ENCODE measurements at regions of chr1 and their contacts with region 1.

Region 1: DNA sequence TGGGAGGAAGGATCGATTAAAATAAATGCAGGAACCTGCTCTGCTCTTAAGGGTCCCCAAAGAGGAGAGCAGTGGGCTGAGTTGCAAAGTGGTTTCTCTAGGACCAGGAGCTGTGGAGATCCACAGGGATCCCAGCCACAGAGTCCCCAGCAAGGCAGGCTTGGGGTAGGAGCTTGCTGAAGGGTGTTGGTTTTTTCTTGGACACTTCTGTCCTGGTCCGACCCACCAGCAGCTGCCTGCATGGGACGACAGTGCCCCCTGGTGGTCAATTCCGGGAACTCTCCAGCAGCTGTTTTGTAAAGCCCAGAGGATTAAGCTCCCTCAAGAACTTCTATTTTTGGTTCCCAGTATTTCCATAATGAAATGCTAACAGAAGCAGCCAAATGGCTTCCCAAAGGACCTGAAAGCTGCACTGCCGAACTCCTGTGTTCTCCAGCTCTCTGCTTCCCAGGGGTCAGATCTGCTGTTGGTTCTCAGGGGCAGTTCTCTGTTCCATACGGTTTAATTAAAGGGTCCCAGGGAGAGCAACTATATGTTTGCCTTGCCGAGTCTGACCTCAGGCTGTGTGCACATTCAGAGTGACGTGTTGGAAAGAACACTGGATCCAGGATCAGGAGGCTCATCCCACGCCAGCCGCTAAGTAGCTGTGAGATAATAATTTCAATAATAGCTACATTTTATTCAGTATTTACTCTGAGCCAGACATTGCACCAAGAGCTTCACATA is 23.2 kb downstream of the NENF start:
- DNase-seq: no peak
- ATAC-seq: peak; percentile 91
- H3K4me3 ChIP-seq: no peak overlapping the region
- H3K27ac ChIP-seq: no peak overlapping the region
- H3K4me1 ChIP-seq: no peaks in the 10 kb centered on the region
- H3K27me3 ChIP-seq: no peaks in the 10 kb centered on the region; a peak in 1 of 4 replicates
- CTCF ChIP-seq: peak; percentile 95 to 99 (median 96)
- EP300 ChIP-seq: no peak
- POLR2A ChIP-seq: no peak
- RAD21 ChIP-seq: peak; percentile 100

Region 2: GRCh38 chr1:211675230-211676105 is 780.5 kb before region 1 on chr1 and contains the start of gene NEK2:
- CTCF ChIA-PET with region 1: interaction called, 128 read pairs
- POLR2A ChIA-PET with region 1: no interaction called
- RAD21 ChIA-PET with region 1: interaction called, 105 read pairs
- SMC1A ChIA-PET with region 1: interaction called, 85 read pairs
- in situ Hi-C with region 1: loop called (anchors 5 kb)
- intact Hi-C with region 1: no loop called
- DNase-seq: peak; percentile 80
- ATAC-seq: peak; percentile 97
- H3K4me3 ChIP-seq: peak within 1 kb of the TSS; percentile 81
- H3K27ac ChIP-seq: peak within 1 kb of the TSS; percentile 68
- H3K4me1 ChIP-seq: peaks cover 11% of the 10 kb centered on the region
- H3K27me3 ChIP-seq: no peaks in the 10 kb centered on the region
- CTCF ChIP-seq: no peak
- EP300 ChIP-seq: no peak
- POLR2A ChIP-seq: peak; percentile 82
- RAD21 ChIP-seq: no peak
- polyA plus RNA-seq, gene NEK2: 16.7 to 21.3 TPM

Region 3: GRCh38 chr1:212062832-212063438 is 393.0 kb before region 1 on chr1:
- CTCF ChIA-PET with region 1: interaction called, 136 read pairs
- POLR2A ChIA-PET with region 1: no interaction called
- RAD21 ChIA-PET with region 1: interaction called, 41 read pairs
- SMC1A ChIA-PET with region 1: interaction called, 45 read pairs
- in situ Hi-C with region 1: loop called (anchors 5 kb)
- intact Hi-C with region 1: no loop called
- DNase-seq: no peak
- ATAC-seq: peak; percentile 83
- H3K4me3 ChIP-seq: no peak overlapping the region
- H3K27ac ChIP-seq: no peak overlapping the region
- H3K4me1 ChIP-seq: no peaks in the 10 kb centered on the region
- H3K27me3 ChIP-seq: no peaks in the 10 kb centered on the region
- CTCF ChIP-seq: peak; percentile 54 to 63 (median 56); a peak in 5 of 6 replicates
- EP300 ChIP-seq: no peak
- POLR2A ChIP-seq: no peak
- RAD21 ChIP-seq: peak; percentile 59

Region 4: GRCh38 chr1:212218911-212219310 is 237.1 kb before region 1 on chr1:
- CTCF ChIA-PET with region 1: no interaction called
- POLR2A ChIA-PET with region 1: no interaction called
- RAD21 ChIA-PET with region 1: no interaction called
- SMC1A ChIA-PET with region 1: no interaction called
- in situ Hi-C with region 1: no loop called
- intact Hi-C with region 1: no loop called
- DNase-seq: peak; percentile 48
- ATAC-seq: peak; percentile 97
- H3K4me3 ChIP-seq: no peak overlapping the region
- H3K27ac ChIP-seq: no peak overlapping the region
- H3K4me1 ChIP-seq: peaks cover 8% of the 10 kb centered on the region
- H3K27me3 ChIP-seq: no peaks in the 10 kb centered on the region
- CTCF ChIP-seq: no peak
- EP300 ChIP-seq: no peak
- POLR2A ChIP-seq: no peak
- RAD21 ChIP-seq: no peak

Region 5: GRCh38 chr1:212315907-212316306 is 140.1 kb before region 1 on chr1:
- CTCF ChIA-PET with region 1: interaction called, 12 read pairs
- POLR2A ChIA-PET with region 1: no interaction called
- RAD21 ChIA-PET with region 1: interaction called, 10 read pairs
- SMC1A ChIA-PET with region 1: interaction called, 13 read pairs
- in situ Hi-C with region 1: no loop called
- intact Hi-C with region 1: loop called (anchors 5 kb)
- DNase-seq: no peak
- ATAC-seq: peak; percentile 89
- H3K4me3 ChIP-seq: no peak overlapping the region
- H3K27ac ChIP-seq: no peak overlapping the region
- H3K4me1 ChIP-seq: no peaks in the 10 kb centered on the region
- H3K27me3 ChIP-seq: no peaks in the 10 kb centered on the region
- CTCF ChIP-seq: peak; percentile 26 to 39 (median 27); a peak in 4 of 6 replicates
- EP300 ChIP-seq: no peak
- POLR2A ChIP-seq: no peak
- RAD21 ChIP-seq: peak; percentile 51

Region 6: DNA sequence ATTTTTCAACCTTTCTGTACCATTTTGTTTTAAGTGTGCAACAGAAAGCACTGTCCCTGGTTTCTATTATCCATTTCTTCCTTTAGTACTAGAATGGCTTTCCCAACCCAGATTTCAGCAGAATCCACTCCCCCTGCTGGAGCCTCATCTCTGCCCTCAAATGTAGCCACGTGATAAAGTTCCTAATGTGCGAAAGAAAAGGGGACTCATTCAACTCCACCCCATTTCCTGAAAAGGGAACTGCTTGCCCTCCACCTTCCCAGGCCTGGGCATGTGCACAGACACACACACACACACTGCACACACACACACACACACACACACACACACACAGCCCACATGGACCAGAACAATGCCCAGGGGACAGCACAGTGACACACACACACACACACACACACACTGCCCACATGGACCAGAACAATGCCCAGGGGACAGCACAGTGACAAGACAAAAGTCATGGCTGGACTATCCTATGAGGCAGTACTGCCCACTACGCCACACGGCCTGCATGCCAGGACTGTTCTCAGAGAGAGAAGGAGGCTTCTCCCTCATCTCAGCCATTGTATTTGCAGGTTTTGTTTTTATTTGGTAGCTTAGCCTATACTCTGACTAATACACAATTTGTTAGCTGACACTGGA is 74.5 kb before region 1 on chr1:
- CTCF ChIA-PET with region 1: interaction called, 60 read pairs
- POLR2A ChIA-PET with region 1: no interaction called
- RAD21 ChIA-PET with region 1: interaction called, 18 read pairs
- SMC1A ChIA-PET with region 1: interaction called, 11 read pairs
- in situ Hi-C with region 1: no loop called
- intact Hi-C with region 1: no loop called
- DNase-seq: no peak
- ATAC-seq: no peak
- H3K4me3 ChIP-seq: no peak overlapping the region
- H3K27ac ChIP-seq: no peak overlapping the region
- H3K4me1 ChIP-seq: no peaks in the 10 kb centered on the region
- H3K27me3 ChIP-seq: no peaks in the 10 kb centered on the region
- CTCF ChIP-seq: no peak
- EP300 ChIP-seq: no peak
- POLR2A ChIP-seq: no peak
- RAD21 ChIP-seq: no peak

Region 7: GRCh38 chr1:212477014-212477679 is 21.2 kb after region 1 on chr1:
- CTCF ChIA-PET with region 1: interaction called, 68 read pairs
- POLR2A ChIA-PET with region 1: interaction called, 3 read pairs
- RAD21 ChIA-PET with region 1: interaction called, 39 read pairs
- SMC1A ChIA-PET with region 1: interaction called, 46 read pairs
- in situ Hi-C with region 1: no loop called
- intact Hi-C with region 1: loop called (anchors 1 kb)
- DNase-seq: peak; percentile 65
- ATAC-seq: peak; percentile 97
- H3K4me3 ChIP-seq: no peak overlapping the region
- H3K27ac ChIP-seq: no peak overlapping the region; the same call in 1 of the 2 replicates
- H3K4me1 ChIP-seq: peaks cover 6% of the 10 kb centered on the region; the same call in 1 of the 2 replicates
- H3K27me3 ChIP-seq: no peaks in the 10 kb centered on the region
- CTCF ChIP-seq: peak; percentile 94 to 97 (median 96)
- EP300 ChIP-seq: no peak
- POLR2A ChIP-seq: no peak
- RAD21 ChIP-seq: peak; percentile 90

Region 8: DNA sequence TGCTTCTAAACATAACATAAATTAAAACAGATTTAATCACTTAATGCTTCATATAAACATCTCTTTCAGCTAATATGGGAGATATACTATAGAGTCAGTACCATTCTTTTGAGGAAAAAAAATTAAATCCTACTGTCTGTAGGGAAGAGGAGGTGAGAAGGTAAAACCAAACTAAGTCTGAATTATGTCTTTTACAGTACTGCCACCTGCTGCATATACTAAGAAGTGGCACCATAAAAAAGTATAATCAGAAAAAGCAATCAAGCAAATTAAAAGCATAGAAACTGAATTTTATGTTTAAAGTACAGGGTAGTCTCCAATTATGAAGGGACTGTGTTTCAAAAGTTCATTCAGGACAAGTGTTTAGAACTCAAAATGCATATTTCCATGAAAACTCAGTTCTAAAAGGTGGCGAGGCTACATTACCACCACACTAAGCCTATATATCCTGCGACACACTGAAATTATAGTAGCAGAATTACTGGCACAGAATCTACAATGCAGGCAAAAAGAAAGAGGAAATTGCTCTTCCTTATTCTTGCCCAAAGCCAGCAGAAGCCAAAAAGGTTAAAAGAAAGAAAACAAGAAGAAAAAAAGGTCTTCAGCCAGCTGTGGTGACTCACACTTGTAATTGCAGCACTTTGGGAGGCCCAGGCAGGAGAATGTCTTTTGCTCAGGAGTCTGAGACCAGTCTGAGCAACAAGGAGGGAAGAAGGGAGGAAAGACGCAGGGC is 326.6 kb after region 1 on chr1:
- CTCF ChIA-PET with region 1: interaction called, 36 read pairs
- POLR2A ChIA-PET with region 1: no interaction called
- RAD21 ChIA-PET with region 1: interaction called, 31 read pairs
- SMC1A ChIA-PET with region 1: interaction called, 43 read pairs
- in situ Hi-C with region 1: no loop called
- intact Hi-C with region 1: loop called (anchors 1 kb)
- DNase-seq: no peak
- ATAC-seq: peak; percentile 68
- H3K4me3 ChIP-seq: no peak overlapping the region
- H3K27ac ChIP-seq: no peak overlapping the region
- H3K4me1 ChIP-seq: peaks cover 10% of the 10 kb centered on the region; the same call in 1 of the 2 replicates
- H3K27me3 ChIP-seq: no peaks in the 10 kb centered on the region
- CTCF ChIP-seq: peak; percentile 53 to 71 (median 64); a peak in 5 of 6 replicates
- EP300 ChIP-seq: no peak
- POLR2A ChIP-seq: no peak
- RAD21 ChIP-seq: peak; percentile 81

Region 9: GRCh38 chr1:212847549-212847948 is 391.6 kb after region 1 on chr1 and contains the start of gene SPATA45:
- CTCF ChIA-PET with region 1: no interaction called
- POLR2A ChIA-PET with region 1: no interaction called
- RAD21 ChIA-PET with region 1: no interaction called
- SMC1A ChIA-PET with region 1: no interaction called
- in situ Hi-C with region 1: no loop called
- intact Hi-C with region 1: no loop called
- DNase-seq: no peak
- ATAC-seq: no peak
- H3K4me3 ChIP-seq: no peak within 1 kb of the TSS
- H3K27ac ChIP-seq: no peak within 1 kb of the TSS
- H3K4me1 ChIP-seq: no peaks in the 10 kb centered on the region
- H3K27me3 ChIP-seq: no peaks in the 10 kb centered on the region
- CTCF ChIP-seq: no peak
- EP300 ChIP-seq: no peak
- POLR2A ChIP-seq: no peak
- RAD21 ChIP-seq: no peak
- polyA plus RNA-seq, gene SPATA45: 0.31 TPM in 1 of 2 experiments, not detected in the other